ENCODE measurements at regions of chr17 and their contacts with region 1.

Region 1: GRCh38 chr17:19377602-19378392 is 501 bp upstream of the MAPK7 start:
- DNase-seq: peak; percentile 93
- ATAC-seq: peak; percentile 95
- H3K4me3 Mint-ChIP-seq: peak overlapping the region; percentile 100
- H3K27ac Mint-ChIP-seq: peak overlapping the region; percentile 99
- H3K4me1 Mint-ChIP-seq: peaks cover 31% of the 10 kb centered on the region
- H3K27me3 Mint-ChIP-seq: no peaks in the 10 kb centered on the region
- CTCF ChIP-seq: no peak

Region 2: DNA sequence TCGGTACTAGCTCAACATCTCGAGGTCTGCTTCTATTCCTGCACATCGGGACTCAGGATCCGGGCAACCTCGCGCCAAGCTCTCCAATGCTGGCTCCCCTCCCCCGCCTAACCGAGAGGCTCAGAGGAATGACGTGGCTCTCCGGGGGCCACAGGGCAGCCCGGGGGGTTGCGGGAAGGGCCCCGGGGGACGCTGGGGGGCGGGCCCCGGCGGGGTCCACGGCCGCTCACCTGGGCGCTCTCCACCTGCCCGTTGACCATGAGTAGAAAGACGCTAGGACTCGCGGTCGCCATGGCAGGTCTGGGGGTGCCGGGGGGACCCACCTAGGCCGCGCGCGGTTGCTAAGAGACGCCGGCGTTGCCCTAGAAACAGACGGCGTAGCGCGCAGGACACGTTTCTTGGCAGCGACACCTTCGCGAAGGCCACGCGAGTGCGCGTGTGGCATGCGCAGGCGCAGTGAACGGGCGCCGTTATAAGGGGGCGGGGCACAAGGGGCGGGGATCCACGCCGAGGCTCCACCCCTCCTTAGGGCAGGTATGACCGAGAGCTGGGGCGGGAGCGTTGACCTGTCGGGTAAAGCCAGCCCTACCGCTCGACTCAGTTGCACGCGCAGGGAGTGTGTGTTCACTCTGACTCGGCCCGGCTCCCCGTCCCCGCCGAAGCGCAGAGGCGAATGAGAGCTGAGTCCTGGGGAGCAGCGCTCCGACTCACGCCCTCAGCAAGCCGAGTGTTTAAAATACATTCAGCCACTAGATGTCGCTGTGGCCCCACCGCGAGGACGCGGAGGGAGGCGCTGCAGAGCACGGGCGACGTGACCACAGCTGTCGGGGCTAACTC is 15.3 kb before region 1 on chr17 and contains the start of gene B9D1:
- CTCF ChIA-PET with region 1: interaction called, 50 read pairs
- POLR2A ChIA-PET with region 1: interaction called, 38 read pairs
- intact Hi-C with region 1: loop called (anchors 1 kb)
- DNase-seq: peak; percentile 85
- ATAC-seq: peak; percentile 92
- H3K4me3 Mint-ChIP-seq: peak within 1 kb of the TSS; percentile 93
- H3K27ac Mint-ChIP-seq: peak within 1 kb of the TSS; percentile 87
- H3K4me1 Mint-ChIP-seq: peaks cover 7% of the 10 kb centered on the region
- H3K27me3 Mint-ChIP-seq: peaks cover 4% of the 10 kb centered on the region
- CTCF ChIP-seq: peak; percentile 98
- total RNA-seq, gene B9D1: 3.3 and 6.7 TPM in 2 replicates

Region 3: DNA sequence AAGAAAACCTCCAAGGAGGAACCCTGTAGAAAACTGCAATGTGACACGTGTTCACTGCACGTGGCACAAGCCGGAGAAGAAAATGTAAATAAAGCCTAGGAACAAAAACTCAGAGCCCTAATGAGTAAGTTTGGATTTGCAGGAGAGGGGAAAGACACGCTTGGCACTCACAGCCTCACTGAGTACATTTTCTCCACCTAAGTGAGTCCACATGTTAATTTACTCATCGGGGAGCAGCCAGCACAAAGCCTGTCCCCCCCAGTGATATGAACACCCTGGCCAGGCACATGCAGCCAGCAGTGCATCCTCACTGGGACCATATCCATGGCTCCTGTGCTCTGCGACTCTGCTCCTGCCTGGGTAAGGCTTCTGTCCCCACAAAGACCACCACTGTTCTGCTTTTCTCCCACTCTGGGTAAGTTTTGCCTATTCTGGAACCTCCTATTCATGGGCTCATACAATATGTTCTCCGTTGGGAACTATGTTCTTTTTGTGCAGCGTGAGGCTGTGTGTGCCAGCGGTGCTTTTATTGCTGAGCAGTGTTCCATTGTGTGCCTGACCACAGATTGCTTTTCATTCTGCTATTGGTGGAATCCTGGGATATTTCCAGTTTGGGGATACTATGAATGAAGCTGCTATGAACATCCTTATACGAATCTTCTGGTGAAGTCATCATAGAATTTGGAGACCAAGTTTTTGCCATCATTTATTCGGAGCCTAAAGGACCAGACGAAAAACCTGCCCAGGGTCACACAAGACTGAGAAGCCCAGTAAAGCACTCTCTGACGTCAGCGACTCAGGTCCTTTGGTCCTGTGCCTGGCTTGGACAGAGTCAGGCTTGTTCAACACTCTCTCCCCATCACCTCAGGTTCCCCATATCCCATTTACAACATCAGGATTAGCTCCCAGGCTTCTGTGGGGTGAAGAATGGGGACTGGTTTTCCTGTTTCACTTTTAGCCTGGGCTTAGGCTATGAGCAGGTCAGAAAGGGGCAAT is 86.5 kb after region 1 on chr17:
- CTCF ChIA-PET with region 1: no interaction called
- POLR2A ChIA-PET with region 1: interaction called, 11 read pairs
- intact Hi-C with region 1: loop called (anchors 2 kb)
- DNase-seq: no peak
- ATAC-seq: no peak
- H3K4me3 Mint-ChIP-seq: peak overlapping the region; percentile 36
- H3K27ac Mint-ChIP-seq: peak overlapping the region; percentile 92
- H3K4me1 Mint-ChIP-seq: peaks cover 49% of the 10 kb centered on the region
- H3K27me3 Mint-ChIP-seq: no peaks in the 10 kb centered on the region
- CTCF ChIP-seq: no peak

Region 4: DNA sequence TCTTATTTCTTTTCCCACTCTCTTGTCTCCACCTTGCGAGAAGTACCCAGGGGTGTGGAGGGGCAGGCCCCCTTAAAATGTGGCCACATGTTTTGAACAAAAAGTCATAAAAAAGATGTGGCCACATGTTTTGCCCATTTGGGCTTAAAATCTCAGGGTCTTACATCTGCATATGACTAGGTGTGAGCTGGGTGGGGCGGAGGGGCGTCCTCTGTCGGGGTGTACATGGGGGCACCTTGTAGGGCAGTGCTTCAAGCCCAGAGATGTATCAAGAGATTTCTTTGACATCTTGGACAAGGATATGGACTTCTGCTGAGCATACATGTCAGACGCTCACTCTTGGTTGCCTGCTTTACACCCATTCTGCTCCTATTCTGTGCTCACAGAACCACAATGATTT is 142.8 kb after region 1 on chr17:
- CTCF ChIA-PET with region 1: no interaction called
- POLR2A ChIA-PET with region 1: no interaction called
- intact Hi-C with region 1: no loop called
- DNase-seq: no peak
- ATAC-seq: no peak
- H3K4me3 Mint-ChIP-seq: no peak overlapping the region
- H3K27ac Mint-ChIP-seq: no peak overlapping the region
- H3K4me1 Mint-ChIP-seq: peaks cover 19% of the 10 kb centered on the region
- H3K27me3 Mint-ChIP-seq: no peaks in the 10 kb centered on the region
- CTCF ChIP-seq: no peak

Region 5: DNA sequence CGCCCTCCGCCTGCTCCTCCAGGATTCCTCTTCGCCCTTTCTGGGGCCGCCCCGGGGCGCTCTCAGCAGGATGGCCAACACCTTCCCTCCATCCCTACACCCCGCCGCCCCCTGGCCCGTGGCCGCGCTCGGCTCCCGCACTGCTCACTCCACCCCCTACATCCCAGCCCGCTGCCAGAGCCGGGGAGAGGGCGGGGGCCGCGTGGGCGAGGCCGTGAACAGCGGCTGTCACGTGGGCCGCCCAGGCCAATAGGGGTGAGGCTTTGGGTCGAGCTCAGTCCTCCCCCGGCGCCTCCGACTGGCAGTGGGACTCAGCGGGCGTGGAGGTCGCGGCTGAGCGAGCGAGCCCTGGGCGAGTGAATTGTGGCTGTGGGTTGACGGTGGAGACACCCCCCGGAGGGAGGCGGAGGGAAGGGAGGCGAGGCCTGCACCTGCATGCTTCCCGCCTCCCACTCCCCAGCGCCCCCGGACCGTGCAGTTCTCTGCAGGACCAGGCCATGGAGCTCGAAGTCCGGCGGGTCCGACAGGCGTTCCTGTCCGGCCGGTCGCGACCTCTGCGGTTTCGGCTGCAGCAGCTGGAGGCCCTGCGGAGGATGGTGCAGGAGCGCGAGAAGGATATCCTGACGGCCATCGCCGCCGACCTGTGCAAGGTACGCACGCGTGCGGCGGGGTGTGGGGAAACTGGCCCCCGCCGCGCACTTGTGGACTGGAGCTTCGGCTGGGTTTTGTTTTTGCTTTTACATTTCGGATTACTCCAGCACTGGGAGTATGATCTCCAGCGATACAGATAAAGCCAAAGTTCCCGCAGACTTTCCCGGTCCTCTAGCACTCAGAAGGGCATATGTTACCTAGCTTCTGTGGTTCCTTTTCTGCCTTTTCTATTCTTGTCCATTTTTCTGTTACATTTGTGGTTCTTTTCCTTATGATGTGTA is 270.9 kb after region 1 on chr17 and contains the start of gene ALDH3A2:
- CTCF ChIA-PET with region 1: interaction called, 6 read pairs
- POLR2A ChIA-PET with region 1: interaction called, 14 read pairs
- intact Hi-C with region 1: loop called (anchors 5 kb)
- DNase-seq: peak; percentile 91
- ATAC-seq: peak; percentile 95
- H3K4me3 Mint-ChIP-seq: peak within 1 kb of the TSS; percentile 93
- H3K27ac Mint-ChIP-seq: peak within 1 kb of the TSS; percentile 95
- H3K4me1 Mint-ChIP-seq: peaks cover 35% of the 10 kb centered on the region
- H3K27me3 Mint-ChIP-seq: peaks cover 2% of the 10 kb centered on the region
- CTCF ChIP-seq: no peak
- total RNA-seq, gene ALDH3A2: 18.3 and 19.3 TPM in 2 replicates

Region 6: GRCh38 chr17:20155258-20156195 is 777.7 kb after region 1 on chr17:
- CTCF ChIA-PET with region 1: no interaction called
- POLR2A ChIA-PET with region 1: interaction called, 3 read pairs
- intact Hi-C with region 1: loop called (anchors 5 kb)
- DNase-seq: peak; percentile 99
- ATAC-seq: peak; percentile 93
- H3K4me3 Mint-ChIP-seq: no peak overlapping the region
- H3K27ac Mint-ChIP-seq: no peak overlapping the region
- H3K4me1 Mint-ChIP-seq: peaks cover 6% of the 10 kb centered on the region
- H3K27me3 Mint-ChIP-seq: no peaks in the 10 kb centered on the region
- CTCF ChIP-seq: no peak

Measured in activated B cell treated with CpG ODN at 0.5 μM for 24 hours (primary cell).